ENCODE measurements at regions of chr6 and their contacts with region 1.

Region 1: DNA sequence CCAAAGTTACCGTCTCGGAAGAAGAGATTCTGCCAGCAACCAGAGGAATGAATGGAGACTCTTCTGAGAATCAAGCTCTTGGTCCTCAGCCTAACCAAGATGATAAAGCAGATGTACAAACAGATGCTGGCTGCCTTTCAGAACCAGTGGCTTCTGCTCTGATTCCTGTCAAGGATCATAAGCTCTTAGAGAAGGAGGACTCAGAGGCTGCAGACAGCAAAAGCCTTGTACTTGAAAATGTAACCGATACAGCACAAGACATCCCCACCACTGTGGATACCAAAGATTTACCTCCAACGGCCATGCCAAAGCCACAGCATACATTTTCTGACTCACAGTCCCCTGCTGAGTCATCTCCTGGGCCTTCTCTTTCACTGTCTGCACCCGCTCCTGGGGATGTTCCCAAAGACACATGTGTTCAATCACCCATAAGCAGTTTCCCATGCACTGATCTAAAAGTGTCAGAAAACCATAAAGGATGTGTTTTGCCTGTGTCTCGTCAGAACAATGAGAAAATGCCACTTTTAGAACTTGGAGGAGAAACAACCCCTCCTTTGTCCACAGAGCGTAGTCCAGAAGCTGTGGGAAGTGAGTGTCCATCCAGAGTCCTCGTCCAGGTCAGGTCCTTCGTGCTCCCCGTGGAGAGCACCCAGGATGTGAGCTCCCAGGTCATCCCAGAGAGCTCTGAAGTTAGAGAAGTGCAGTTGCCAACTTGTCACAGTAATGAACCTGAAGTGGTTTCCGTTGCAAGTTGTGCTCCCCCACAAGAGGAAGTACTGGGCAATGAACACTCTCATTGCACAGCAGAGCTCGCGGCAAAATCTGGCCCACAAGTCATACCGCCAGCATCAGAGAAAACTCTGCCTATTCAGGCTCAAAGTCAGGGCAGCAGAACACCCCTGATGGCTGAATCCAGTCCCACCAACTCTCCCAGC is 109.6 kb downstream of the RTN4IP1 start:
- DNase-seq: peak; percentile 76 to 95 (median 79)
- H3K4me3 ChIP-seq: peak overlapping the region; percentile 58 to 61
- H3K4me3 Mint-ChIP-seq: peak overlapping the region; percentile 92 to 98 (median 94)
- H3K27ac ChIP-seq: peak overlapping the region; percentile 78
- H3K27ac Mint-ChIP-seq: peak overlapping the region; percentile 94 to 98 (median 98)
- H3K4me1 ChIP-seq: peaks cover 66% of the 10 kb centered on the region
- H3K4me1 Mint-ChIP-seq: peaks cover 34 to 74% (median 46%) of the 10 kb centered on the region in 4 donors
- H3K27me3 ChIP-seq: no peaks in the 10 kb centered on the region
- H3K27me3 Mint-ChIP-seq: no peaks in the 10 kb centered on the region

Region 2: GRCh38 chr6:104940881-104941728 is 1578.6 kb before region 1 on chr6:
- CTCF ChIA-PET with region 1: no interaction called
- POLR2A ChIA-PET with region 1: no interaction called
- intact Hi-C with region 1: no loop called
- DNase-seq: peak in 2 of 5 donors; percentile 20
- H3K4me3 ChIP-seq: no peak overlapping the region
- H3K4me3 Mint-ChIP-seq: peak overlapping the region; percentile 31 to 78 (median 59)
- H3K27ac ChIP-seq: no peak overlapping the region
- H3K27ac Mint-ChIP-seq: no peak overlapping the region
- H3K4me1 ChIP-seq: no peaks in the 10 kb centered on the region
- H3K4me1 Mint-ChIP-seq: peaks cover 0 to 12% (median 3%) of the 10 kb centered on the region in 4 donors
- H3K27me3 ChIP-seq: peaks cover 8% of the 10 kb centered on the region
- H3K27me3 Mint-ChIP-seq: peaks cover 28% of the 10 kb centered on the region in 2 donors

Region 3: DNA sequence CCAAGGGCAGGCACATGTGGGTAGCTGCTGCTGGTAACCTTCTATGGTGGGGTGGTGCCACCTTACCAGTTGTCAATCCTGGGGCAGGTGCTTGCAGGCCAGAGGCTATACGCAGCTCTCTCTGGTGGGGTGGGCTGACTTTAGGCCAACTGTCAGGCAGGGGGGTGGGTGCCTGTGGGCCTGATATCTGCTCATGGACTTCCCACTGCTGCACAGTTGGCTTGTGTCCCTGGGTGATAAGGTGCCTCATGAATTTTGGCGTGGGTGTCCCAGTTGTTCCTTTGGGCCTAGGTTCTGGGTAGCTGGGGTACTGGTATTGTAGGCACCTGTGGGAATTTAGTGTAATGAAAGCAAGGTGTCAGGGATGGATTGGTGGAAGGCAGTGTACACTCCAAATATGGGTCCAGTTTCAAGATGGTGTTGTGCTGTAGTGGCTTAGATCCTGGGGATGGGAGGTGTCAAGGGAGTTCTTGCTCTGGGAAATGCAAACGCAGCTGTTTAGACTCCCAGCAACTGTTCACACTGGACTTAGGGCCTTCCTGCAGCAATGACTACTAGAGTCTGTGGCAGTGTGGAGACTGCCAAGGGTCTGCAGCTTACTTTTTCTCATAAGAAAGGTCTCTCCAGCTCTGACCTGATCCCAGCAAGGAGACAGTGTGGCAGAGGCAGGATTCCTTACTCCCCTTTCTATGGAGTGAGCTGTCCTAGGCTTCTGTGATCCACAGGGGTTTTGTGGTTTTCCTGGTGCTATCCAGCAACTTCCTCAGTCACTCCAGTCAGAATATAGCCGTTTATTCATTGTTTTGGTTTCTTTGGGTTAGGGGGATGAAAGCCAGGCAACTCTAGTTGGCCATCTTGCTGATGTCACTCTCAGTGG is 31.0 kb before region 1 on chr6:
- CTCF ChIA-PET with region 1: no interaction called
- POLR2A ChIA-PET with region 1: no interaction called
- intact Hi-C with region 1: no loop called
- DNase-seq: no peak
- H3K4me3 ChIP-seq: no peak overlapping the region
- H3K4me3 Mint-ChIP-seq: no peak overlapping the region
- H3K27ac ChIP-seq: no peak overlapping the region
- H3K27ac Mint-ChIP-seq: no peak overlapping the region
- H3K4me1 ChIP-seq: no peaks in the 10 kb centered on the region
- H3K4me1 Mint-ChIP-seq: no peaks in the 10 kb centered on the region
- H3K27me3 ChIP-seq: no peaks in the 10 kb centered on the region
- H3K27me3 Mint-ChIP-seq: peaks cover 1 to 3% of the 10 kb centered on the region in 2 donors

Region 4: DNA sequence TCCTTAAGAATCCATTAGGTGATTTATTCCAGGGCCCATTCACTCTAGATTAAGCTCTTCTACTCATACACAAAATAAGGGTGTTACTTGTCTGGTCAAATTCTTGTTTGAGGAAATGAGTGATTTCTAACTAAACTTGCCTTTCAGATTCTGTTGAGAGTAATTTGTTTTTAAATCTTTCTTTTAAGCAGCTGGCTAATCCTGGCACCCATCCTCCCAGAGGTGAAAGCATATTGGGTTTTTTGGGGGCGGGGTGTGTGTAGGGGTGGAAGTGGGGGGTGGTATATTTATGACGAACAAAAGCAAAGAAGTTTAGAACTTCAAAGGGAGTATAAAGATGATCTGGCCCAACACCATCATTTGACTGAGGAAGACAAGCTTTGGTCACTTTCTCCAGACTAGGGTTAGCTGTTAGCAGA is 14.8 kb after region 1 on chr6:
- CTCF ChIA-PET with region 1: interaction called, 10 read pairs
- POLR2A ChIA-PET with region 1: interaction called, 135 read pairs
- intact Hi-C with region 1: loop called (anchors 2 kb)
- DNase-seq: peak in 1 of 5 donors; percentile 35
- H3K4me3 ChIP-seq: no peak overlapping the region
- H3K4me3 Mint-ChIP-seq: peak overlapping the region in 5 of 8 donors; percentile 4 to 70 (median 46)
- H3K27ac ChIP-seq: no peak overlapping the region
- H3K27ac Mint-ChIP-seq: peak overlapping the region; percentile 9 to 86 (median 67)
- H3K4me1 ChIP-seq: peaks cover 79% of the 10 kb centered on the region
- H3K4me1 Mint-ChIP-seq: peaks cover 73 to 87% (median 80%) of the 10 kb centered on the region in 4 donors
- H3K27me3 ChIP-seq: no peaks in the 10 kb centered on the region
- H3K27me3 Mint-ChIP-seq: no peaks in the 10 kb centered on the region

Region 5: GRCh38 chr6:106539936-106540335 is 20.2 kb after region 1 on chr6:
- CTCF ChIA-PET with region 1: interaction called, 10 read pairs
- POLR2A ChIA-PET with region 1: interaction called, 135 read pairs
- intact Hi-C with region 1: loop called (anchors 2 kb)
- DNase-seq: no peak
- H3K4me3 ChIP-seq: no peak overlapping the region
- H3K4me3 Mint-ChIP-seq: peak overlapping the region in 1 of 8 donors; percentile 4
- H3K27ac ChIP-seq: no peak overlapping the region
- H3K27ac Mint-ChIP-seq: peak overlapping the region in 6 of 7 donors; percentile 48 to 85 (median 78)
- H3K4me1 ChIP-seq: peaks cover 41% of the 10 kb centered on the region
- H3K4me1 Mint-ChIP-seq: peaks cover 41 to 58% (median 50%) of the 10 kb centered on the region in 4 donors
- H3K27me3 ChIP-seq: no peaks in the 10 kb centered on the region
- H3K27me3 Mint-ChIP-seq: no peaks in the 10 kb centered on the region

Region 6: DNA sequence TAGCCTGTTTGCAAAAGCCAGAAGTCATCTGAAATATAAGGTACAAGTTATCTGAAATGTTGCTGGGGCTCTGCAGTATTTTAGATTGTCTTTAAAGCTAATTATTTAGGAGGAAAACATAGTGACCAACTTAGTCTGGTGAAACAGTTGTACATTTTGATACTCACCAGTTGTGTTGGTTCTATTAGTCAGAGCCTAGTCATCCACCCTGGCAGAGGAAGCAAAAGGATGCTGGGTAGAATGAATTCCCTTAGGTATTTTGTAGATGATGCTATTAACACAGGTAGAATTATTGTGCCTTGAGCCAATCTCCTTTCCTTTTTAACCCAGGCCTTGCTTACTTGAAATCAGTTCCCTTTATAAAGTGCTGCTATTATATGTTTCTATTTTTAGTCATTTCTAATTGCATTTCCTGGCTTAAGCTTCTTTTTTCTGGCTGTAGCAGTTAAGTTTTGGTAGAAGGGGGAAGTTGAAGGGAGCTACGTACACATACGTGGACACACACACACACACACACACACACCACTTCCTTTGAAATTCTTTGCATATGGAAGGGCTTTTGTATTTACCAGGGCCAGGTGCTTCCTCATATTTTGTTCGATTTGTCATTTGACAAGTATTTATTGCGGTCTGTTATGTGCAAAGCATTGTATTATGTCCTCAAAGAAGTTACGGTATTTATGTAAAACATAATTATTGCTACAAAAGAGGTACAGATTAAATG is 27.1 kb after region 1 on chr6:
- CTCF ChIA-PET with region 1: interaction called, 163 read pairs
- POLR2A ChIA-PET with region 1: interaction called, 33 read pairs
- intact Hi-C with region 1: no loop called
- DNase-seq: no peak
- H3K4me3 ChIP-seq: no peak overlapping the region
- H3K4me3 Mint-ChIP-seq: peak overlapping the region in 1 of 8 donors; percentile 20
- H3K27ac ChIP-seq: no peak overlapping the region
- H3K27ac Mint-ChIP-seq: peak overlapping the region; percentile 39 to 87 (median 77)
- H3K4me1 ChIP-seq: peaks cover 18% of the 10 kb centered on the region
- H3K4me1 Mint-ChIP-seq: peaks cover 26 to 41% (median 34%) of the 10 kb centered on the region in 4 donors
- H3K27me3 ChIP-seq: no peaks in the 10 kb centered on the region
- H3K27me3 Mint-ChIP-seq: no peaks in the 10 kb centered on the region

Region 7: DNA sequence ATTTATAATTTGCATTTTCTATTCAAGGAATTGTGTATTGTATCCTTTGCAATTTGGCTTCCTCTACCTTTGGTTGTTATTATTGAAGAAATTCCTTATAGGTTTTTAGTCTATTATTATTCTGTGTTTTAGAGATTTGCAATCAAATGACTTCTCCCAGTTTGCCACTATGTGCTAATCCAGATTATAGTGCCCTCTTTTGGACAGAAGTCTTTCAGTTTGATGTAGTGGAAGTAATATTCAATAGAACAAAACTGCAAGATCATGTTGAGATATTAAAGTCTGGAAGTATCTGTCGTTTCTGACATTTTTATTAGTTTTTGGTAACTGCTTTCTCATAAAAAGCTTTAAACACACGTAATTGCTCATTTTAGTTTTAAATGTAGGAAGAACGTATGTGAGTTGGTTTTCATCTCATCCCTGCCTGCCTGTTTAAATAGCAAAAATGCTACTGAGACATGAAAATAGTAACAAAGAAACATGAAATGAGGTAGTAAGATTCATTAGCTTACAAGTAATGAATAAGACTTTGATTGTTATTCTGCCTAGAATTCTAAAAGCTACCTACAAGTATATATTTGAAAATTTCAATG is 36.7 kb after region 1 on chr6:
- CTCF ChIA-PET with region 1: interaction called, 163 read pairs
- POLR2A ChIA-PET with region 1: interaction called, 12 read pairs
- intact Hi-C with region 1: loop called (anchors 1 kb)
- DNase-seq: peak in 4 of 5 donors; percentile 43 to 46 (median 45)
- H3K4me3 ChIP-seq: no peak overlapping the region
- H3K4me3 Mint-ChIP-seq: no peak overlapping the region
- H3K27ac ChIP-seq: no peak overlapping the region
- H3K27ac Mint-ChIP-seq: peak overlapping the region in 3 of 7 donors; percentile 2 to 75 (median 68)
- H3K4me1 ChIP-seq: no peaks in the 10 kb centered on the region
- H3K4me1 Mint-ChIP-seq: peaks cover 4 to 9% (median 7%) of the 10 kb centered on the region in 4 donors
- H3K27me3 ChIP-seq: no peaks in the 10 kb centered on the region
- H3K27me3 Mint-ChIP-seq: no peaks in the 10 kb centered on the region

Measured in CD4-positive, alpha-beta memory T cell (primary cell).